ENCODE measurements at regions of chr2 and their contacts with region 1.

Region 1: DNA sequence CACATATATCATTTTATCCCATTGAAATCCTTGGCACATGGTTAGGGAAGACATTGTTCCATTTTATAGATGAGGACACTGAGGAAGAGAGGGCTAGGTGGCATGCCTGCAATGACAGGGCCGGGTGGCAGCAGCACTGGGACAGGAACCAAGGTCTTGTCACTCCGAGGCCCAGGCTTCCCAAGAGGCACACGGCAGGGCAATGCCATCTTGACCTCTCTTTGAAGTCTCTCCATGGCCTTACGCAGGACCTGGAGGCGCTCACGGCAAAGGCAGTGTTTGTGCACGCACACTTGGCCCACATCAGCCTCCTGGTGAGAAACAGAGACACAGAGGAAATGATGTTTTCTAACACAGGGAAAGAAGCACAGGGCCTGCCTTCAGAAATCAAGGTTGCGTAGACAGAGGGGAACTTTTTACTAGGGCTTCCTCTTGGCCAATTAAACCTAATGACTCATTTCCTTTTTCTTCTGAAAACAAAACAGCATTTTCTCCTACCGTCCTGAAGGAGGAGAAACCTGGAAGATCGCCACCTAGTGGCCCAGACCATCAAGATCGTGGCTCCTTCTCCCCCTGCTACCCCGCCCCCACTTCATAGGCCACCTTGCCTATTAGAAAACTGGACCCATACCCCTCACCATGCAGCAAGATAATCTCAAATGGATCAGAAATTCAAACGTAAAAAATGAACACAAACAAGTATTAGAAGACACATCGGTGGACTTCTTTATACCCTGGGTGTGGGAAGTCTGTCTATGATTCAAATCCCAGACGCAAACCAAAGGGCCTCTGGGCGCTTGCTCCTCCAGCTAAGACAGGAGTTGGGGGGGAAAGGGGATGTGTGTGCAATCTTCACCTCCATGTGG is 74.6 kb upstream of the SP3 start:
- DNase-seq: peak; percentile 90

Region 2: GRCh38 chr2:173402405-173402974 is 637.3 kb before region 1 on chr2:
- intact Hi-C with region 1: loop called (anchors 10 kb)
- DNase-seq: peak; percentile 85

Region 3: DNA sequence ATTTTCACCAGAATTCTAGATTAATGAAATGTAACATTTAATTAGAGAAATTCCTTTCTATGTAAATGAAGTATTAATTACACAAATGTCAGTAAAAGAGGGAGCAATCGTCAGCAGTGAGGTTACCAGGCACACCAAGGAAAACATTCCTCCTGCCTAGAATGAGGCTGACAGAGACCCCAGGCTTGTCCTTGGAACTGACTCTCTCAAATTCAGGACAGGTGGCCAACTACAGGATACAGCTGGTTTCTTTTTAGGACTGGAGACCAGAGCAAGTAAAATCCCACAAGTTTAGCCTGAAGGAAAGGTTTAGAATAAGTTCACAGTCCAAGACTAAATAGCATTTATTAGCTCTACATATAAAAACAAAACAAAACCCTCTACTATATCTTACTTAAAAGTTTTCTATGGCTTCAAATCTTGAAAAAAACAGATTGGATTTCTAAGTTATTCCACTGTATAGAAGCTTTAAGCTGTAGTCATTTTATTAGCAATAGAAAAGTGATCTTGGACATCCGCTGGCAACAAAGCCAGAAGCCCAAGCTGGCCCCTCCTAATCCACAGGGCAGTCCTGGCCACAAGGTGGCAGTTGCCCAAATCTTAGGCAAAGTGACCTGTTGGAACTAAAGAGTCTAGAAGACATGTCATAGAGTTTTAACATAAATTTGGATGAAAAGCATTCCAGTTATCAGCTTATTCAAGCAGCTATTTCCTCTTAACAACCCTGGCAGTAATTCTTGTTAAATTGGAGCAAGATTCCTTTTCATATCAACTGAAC is 155.6 kb before region 1 on chr2:
- intact Hi-C with region 1: loop called (anchors 5 kb)
- DNase-seq: no peak

Region 4: DNA sequence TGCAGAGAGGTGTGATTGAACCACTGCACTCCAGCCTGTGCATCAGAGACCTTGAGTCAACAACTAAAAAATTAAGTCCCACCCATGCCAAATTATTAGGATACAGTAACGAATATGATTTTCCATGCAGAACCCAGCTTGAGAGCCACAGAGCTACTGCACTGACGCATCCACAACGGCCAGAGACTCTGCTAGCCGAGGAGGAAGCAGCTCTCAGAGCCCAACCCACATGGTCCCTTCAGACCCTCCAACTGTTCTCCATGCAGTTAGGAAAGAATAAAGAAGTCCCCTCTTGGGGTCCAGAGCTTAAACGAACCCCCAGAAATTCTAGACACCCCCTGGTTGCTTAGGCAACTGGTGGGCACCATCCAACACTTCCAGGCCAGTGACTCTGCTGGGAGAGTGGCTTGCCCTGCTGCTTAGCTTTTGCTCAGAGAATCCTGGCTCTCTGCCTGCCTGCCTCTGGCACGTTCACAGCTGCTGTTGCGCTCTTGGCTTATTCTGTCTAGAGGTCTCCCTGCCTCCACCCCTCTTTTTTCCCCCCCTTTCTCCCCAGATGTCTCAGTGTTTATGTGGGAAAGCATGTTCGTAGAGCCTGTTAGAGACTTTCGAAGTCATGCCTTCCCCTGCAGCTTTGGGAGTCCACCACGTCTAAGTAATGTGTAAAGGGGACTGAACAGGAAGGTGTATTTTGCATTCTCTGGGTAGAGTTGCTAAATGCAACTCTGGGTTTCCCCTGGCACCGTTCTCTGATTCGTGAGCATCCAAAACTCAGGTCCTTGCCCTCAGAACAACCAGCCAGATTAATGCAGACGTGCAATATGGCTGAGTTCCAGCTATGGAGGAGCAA is 48.6 kb before region 1 on chr2:
- intact Hi-C with region 1: loop called (anchors 1 kb)
- DNase-seq: peak; percentile 85

Region 5: GRCh38 chr2:174341286-174341994 is 301.7 kb after region 1 on chr2:
- intact Hi-C with region 1: loop called (anchors 10 kb)
- DNase-seq: peak; percentile 94

Region 6: GRCh38 chr2:174465327-174465726 is 425.5 kb after region 1 on chr2:
- intact Hi-C with region 1: no loop called
- DNase-seq: no peak

Measured in cardiac septum (tissue), 1 donor.